Dorsolateral prefrontal cortex (tissue), 120 donors: ENCODE measurements at regions of chr7 and their contacts with region 1.

Region 1: DNA sequence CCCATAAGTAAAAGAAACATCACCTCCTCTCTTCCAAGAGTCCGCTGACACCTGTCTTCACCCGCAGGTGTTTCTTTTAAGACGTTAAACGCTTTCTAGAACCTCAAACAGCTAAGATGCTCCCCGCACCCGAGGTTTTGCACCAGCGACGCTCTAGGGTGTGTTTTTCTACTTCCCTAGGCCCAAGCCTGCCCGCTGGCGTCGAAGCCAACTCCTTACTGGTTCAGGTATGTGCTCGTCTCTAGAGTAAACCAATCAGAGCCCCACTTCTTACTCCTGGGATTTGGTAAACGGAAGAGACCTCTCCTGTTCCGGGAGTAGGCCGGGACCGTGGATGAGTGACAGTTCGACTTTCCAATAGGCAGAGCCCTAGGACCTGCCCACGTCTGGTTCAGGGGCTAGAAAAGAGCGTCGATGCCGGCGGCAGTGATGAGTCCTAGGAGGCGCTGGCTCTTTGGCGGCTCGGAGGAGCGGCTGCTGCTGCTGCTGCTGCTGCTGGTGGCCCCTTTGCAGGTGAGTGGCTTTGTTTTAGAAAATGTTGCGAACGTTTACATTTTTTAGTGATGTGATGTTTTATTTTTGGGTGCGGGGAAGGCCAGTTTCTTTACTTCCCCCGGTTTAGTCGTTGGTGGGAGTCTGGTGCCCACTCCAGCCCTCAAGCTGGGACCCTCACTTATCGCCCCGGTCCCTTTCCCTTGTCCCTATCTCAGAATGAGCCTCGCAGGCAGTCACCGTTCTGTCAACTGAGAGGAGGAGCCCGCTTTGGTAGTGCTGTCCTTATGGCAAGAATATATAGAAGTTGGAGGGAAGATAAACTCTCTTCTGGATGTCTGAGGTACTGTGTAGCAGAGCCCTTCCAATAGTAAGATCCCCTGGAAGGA is at the start of gene BPGM:
- DNase-seq: peak; percentile 92 to 98 (median 98)
- H3K4me3 ChIP-seq: peak within 1 kb of the TSS; percentile 58 to 97 (median 82)
- H3K27ac ChIP-seq: peak within 1 kb of the TSS in 58 of 59 donors; percentile 22 to 95 (median 84)
- H3K27me3 ChIP-seq: no peaks in the 10 kb centered on the region
- CTCF ChIP-seq: peak in 47 of 56 donors; percentile 14 to 62 (median 40)
- total RNA-seq, gene BPGM: 10.1 to 26.8 (median 16.2) TPM

Region 2: GRCh38 chr7:134458806-134459698 is 187.6 kb before region 1 on chr7 and contains the start of gene AKR1B1:
- intact Hi-C with region 1: loop called in 1 of 2 experiments (anchors 2 kb)
- DNase-seq: peak; percentile 81 to 96 (median 92)
- H3K4me3 ChIP-seq: peak within 1 kb of the TSS; percentile 58 to 99 (median 92)
- H3K27ac ChIP-seq: peak within 1 kb of the TSS; percentile 14 to 97 (median 87)
- H3K27me3 ChIP-seq: no peaks in the 10 kb centered on the region
- CTCF ChIP-seq: peak; percentile 33 to 88 (median 64)
- total RNA-seq, gene AKR1B1: 77.9 to 140 (median 103) TPM

Region 3: DNA sequence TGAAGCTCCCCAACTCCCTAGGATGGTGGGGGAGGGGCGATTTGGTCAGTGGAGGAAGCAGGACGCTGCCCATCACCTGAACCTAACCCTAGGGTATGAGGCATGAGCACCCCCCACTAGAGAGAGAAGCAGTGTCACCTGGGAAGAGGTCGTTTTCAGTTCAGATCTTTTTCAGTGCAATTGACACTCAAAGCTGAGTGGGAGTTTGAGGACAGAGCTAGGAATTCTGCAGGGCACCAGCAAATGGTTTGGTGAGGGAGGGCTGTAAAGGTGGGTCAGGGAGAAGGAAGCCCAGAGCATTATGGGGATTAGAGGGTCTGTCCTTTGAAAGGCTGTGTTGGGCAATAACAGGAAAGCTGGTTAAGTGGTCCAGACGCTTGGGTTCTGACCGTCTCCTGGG is 10.9 kb after region 1 on chr7:
- intact Hi-C with region 1: no loop called
- DNase-seq: no peak
- H3K4me3 ChIP-seq: no peak overlapping the region
- H3K27ac ChIP-seq: no peak overlapping the region
- H3K27me3 ChIP-seq: no peaks in the 10 kb centered on the region
- CTCF ChIP-seq: no peak

Region 4: GRCh38 chr7:134669845-134670373 is 23.2 kb after region 1 on chr7:
- intact Hi-C with region 1: no loop called
- DNase-seq: peak in 1 of 10 donors; percentile 15
- H3K4me3 ChIP-seq: no peak overlapping the region
- H3K27ac ChIP-seq: no peak overlapping the region
- H3K27me3 ChIP-seq: no peaks in the 10 kb centered on the region
- CTCF ChIP-seq: no peak

Region 5: GRCh38 chr7:134811765-134812164 is 165.1 kb after region 1 on chr7:
- intact Hi-C with region 1: no loop called
- DNase-seq: no peak
- H3K4me3 ChIP-seq: no peak overlapping the region
- H3K27ac ChIP-seq: peak overlapping the region in 1 of 59 donors; percentile 28
- H3K27me3 ChIP-seq: no peaks in the 10 kb centered on the region
- CTCF ChIP-seq: no peak

Region 6: DNA sequence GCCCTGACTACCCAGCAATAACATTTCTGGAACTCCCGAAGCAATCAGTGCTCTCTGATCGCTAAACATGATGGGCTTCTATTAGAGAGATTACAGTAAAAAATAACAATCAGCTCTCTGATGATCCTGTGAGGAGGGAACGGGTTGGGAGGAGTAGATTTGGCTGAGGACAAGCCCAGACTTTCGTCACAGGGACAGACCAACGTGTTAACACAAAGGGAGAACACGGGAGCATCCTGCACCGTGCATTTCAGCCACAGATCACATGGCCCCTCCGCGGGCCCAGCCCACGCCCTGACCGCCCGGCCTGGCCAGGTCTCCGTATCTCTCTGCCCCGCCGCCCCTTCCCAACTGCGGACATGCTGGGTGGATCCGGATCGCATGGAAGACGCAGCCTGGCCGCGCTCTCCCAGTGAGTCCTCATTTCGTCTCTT is 244.6 kb after region 1 on chr7:
- intact Hi-C with region 1: loop called in 1 of 2 experiments (anchors 2 kb)
- DNase-seq: peak; percentile 59 to 89 (median 82)
- H3K4me3 ChIP-seq: peak overlapping the region; percentile 49 to 90 (median 71)
- H3K27ac ChIP-seq: peak overlapping the region in 58 of 59 donors; percentile 53 to 96 (median 89)
- H3K27me3 ChIP-seq: no peaks in the 10 kb centered on the region
- CTCF ChIP-seq: peak in 9 of 56 donors; percentile 4 to 23 (median 10)

Region 7: GRCh38 chr7:135300913-135301765 is 654.5 kb after region 1 on chr7:
- intact Hi-C with region 1: no loop called
- DNase-seq: no peak
- H3K4me3 ChIP-seq: no peak overlapping the region
- H3K27ac ChIP-seq: no peak overlapping the region
- H3K27me3 ChIP-seq: no peaks in the 10 kb centered on the region
- CTCF ChIP-seq: no peak